ENCODE measurements at regions of chr5 and their contacts with region 1.

Region 1: DNA sequence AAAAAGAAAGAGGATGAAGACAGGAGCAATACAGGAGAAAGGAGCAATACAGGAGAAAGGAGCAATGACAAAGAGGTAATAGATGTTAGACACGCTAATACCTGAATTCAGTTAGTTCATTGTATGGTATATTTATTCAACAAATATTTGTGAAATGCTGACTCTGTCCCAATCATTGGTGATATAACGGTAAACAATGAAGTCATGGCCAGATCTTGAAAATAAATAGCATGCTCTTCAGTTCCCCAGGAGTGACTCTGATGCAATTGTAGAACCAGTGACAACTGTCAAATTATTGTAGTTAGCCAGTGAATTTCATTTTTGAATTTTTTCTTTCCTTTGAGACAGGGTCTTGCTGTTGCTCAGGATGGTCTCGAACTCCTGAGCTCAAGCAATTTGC is 48.0 kb upstream of the SPINK14 start:
- DNase-seq: no peak
- ATAC-seq: no peak
- H3K4me3 ChIP-seq: no peak overlapping the region
- H3K27ac ChIP-seq: no peak overlapping the region
- H3K4me1 ChIP-seq: no peaks in the 10 kb centered on the region
- H3K27me3 ChIP-seq: no peaks in the 10 kb centered on the region
- CTCF ChIP-seq: no peak
- POLR2A ChIP-seq: no peak
- RAD21 ChIP-seq: no peak

Region 2: GRCh38 chr5:147857302-147858129 is 262.8 kb before region 1 on chr5:
- CTCF ChIA-PET with region 1: no interaction called
- POLR2A ChIA-PET with region 1: no interaction called
- dilution Hi-C with region 1: no loop called
- in situ Hi-C with region 1: no loop called
- intact Hi-C with region 1: loop called (anchors 5 kb)
- DNase-seq: peak; percentile 56
- ATAC-seq: peak; percentile 78
- H3K4me3 ChIP-seq: no peak overlapping the region
- H3K27ac ChIP-seq: no peak overlapping the region
- H3K4me1 ChIP-seq: no peaks in the 10 kb centered on the region
- H3K27me3 ChIP-seq: no peaks in the 10 kb centered on the region
- CTCF ChIP-seq: peak; percentile 70
- POLR2A ChIP-seq: no peak
- RAD21 ChIP-seq: peak; percentile 57

Region 3: GRCh38 chr5:147949711-147950573 is 170.4 kb before region 1 on chr5:
- CTCF ChIA-PET with region 1: no interaction called
- POLR2A ChIA-PET with region 1: no interaction called
- dilution Hi-C with region 1: no loop called
- in situ Hi-C with region 1: no loop called
- intact Hi-C with region 1: loop called (anchors 5 kb)
- DNase-seq: peak; percentile 39
- ATAC-seq: peak; percentile 64
- H3K4me3 ChIP-seq: no peak overlapping the region
- H3K27ac ChIP-seq: no peak overlapping the region
- H3K4me1 ChIP-seq: no peaks in the 10 kb centered on the region
- H3K27me3 ChIP-seq: no peaks in the 10 kb centered on the region
- CTCF ChIP-seq: peak; percentile 63
- POLR2A ChIP-seq: no peak
- RAD21 ChIP-seq: peak; percentile 54

Region 4: GRCh38 chr5:148104226-148104625 is 16.1 kb before region 1 on chr5:
- CTCF ChIA-PET with region 1: no interaction called
- POLR2A ChIA-PET with region 1: no interaction called
- dilution Hi-C with region 1: no loop called
- in situ Hi-C with region 1: no loop called
- intact Hi-C with region 1: no loop called
- DNase-seq: no peak
- ATAC-seq: no peak
- H3K4me3 ChIP-seq: no peak overlapping the region
- H3K27ac ChIP-seq: no peak overlapping the region
- H3K4me1 ChIP-seq: no peaks in the 10 kb centered on the region
- H3K27me3 ChIP-seq: no peaks in the 10 kb centered on the region
- CTCF ChIP-seq: no peak
- POLR2A ChIP-seq: no peak
- RAD21 ChIP-seq: no peak

Measured in IMR-90 (cell line).